ENCODE measurements at regions of chr5 and their contacts with region 1.

Region 1: DNA sequence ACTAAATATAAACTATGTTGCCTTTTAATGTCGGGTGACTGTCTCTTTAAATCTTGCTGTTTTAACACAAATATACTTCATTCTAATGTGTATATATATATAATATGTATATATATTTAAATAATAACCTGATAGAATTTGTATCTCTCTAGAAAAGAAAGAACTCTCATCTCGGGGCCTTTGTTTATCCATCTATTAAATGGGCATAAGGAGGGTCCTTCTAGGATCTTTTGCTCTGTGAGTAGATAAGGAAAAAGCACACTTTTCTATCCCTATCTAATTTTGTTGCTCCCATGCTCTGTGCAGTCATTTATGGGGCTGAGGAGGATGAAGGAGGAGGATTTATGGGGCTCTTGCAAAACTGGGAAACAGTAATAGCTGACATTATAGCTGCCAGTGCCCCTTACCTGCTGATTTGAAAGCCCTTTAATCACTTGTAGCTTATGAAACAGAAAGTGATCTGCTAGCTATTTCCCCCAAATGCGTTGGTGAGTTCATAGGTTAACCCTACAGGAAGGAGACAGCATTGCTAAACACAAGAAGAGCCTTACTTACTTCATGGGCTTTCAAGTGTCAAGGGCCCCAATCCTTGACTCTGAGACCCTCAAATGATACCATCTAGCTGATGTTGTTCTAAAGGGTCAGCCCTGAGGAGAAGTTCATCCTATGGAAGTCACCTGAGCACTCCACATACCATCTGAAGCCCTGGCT is 5.8 kb upstream of the PPARGC1B start:
- DNase-seq: peak; percentile 43
- ATAC-seq: peak; percentile 97
- H3K4me3 ChIP-seq: no peak overlapping the region
- H3K27ac ChIP-seq: peak overlapping the region; percentile 52; the same call in 1 of the 2 replicates
- H3K4me1 ChIP-seq: peaks cover 6% of the 10 kb centered on the region
- H3K27me3 ChIP-seq: no peaks in the 10 kb centered on the region
- CTCF ChIP-seq: no peak
- EP300 ChIP-seq: no peak
- POLR2A ChIP-seq: no peak
- RAD21 ChIP-seq: no peak

Region 2: GRCh38 chr5:149782018-149782894 is 58.0 kb after region 1 on chr5:
- CTCF ChIA-PET with region 1: interaction called, 10 read pairs
- POLR2A ChIA-PET with region 1: interaction called, 5 read pairs
- RAD21 ChIA-PET with region 1: interaction called, 3 read pairs
- SMC1A ChIA-PET with region 1: interaction called, 5 read pairs
- in situ Hi-C with region 1: no loop called
- intact Hi-C with region 1: no loop called
- DNase-seq: no peak
- ATAC-seq: no peak
- H3K4me3 ChIP-seq: no peak overlapping the region
- H3K27ac ChIP-seq: peak overlapping the region; percentile 13; the same call in 1 of the 2 replicates
- H3K4me1 ChIP-seq: peaks cover 48% of the 10 kb centered on the region
- H3K27me3 ChIP-seq: no peaks in the 10 kb centered on the region
- CTCF ChIP-seq: no peak
- EP300 ChIP-seq: no peak
- POLR2A ChIP-seq: no peak
- RAD21 ChIP-seq: no peak